Activated T-helper 1 cell treated with anti-CD3 and anti-CD28 coated beads, Interleukin-12 subunit alpha, Interleukin-12 subunit beta, Interleukin-2, Interleukin-4 antibody, amounts not matched to agents 30 ng/mL and 10 ng/mL and 1 ng/mL, durations not matched to agents 14 hours and 24 hours and 36 hours (primary cell): ENCODE measurements at regions of chr16 and their contacts with region 1.

Region 1: GRCh38 chr16:1677802-1678496 is at the start of gene JPT2:
- DNase-seq: peak; percentile 96
- H3K4me3 Mint-ChIP-seq: peak within 1 kb of the TSS; percentile 92
- H3K27ac Mint-ChIP-seq: peak within 1 kb of the TSS; percentile 91
- H3K4me1 Mint-ChIP-seq: peaks cover 32% of the 10 kb centered on the region
- H3K27me3 Mint-ChIP-seq: no peaks in the 10 kb centered on the region
- total RNA-seq, gene JPT2: 106 and 119 TPM in 2 replicates

Region 2: DNA sequence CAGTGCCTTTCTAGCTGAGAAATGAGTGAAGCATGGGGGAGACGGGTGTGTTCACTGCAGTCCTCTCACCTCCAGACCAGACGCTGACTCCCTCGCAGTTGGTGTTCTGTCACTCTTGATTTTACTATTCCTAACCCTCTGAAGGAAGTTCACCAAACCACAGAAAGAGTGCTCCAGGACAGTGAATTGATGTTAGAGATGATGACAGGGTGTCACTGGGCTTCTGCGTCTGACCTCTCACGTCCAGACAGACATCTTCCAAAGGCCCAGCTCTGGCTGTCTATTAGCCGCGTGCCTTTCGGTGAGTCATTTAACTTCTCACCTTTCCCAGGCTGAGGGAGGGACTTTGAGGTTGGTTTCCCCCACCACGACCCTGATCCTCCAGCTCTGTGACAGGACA is 57.6 kb before region 1 on chr16:
- intact Hi-C with region 1: loop called (anchors 2 kb)
- DNase-seq: no peak
- H3K4me3 Mint-ChIP-seq: no peak overlapping the region
- H3K27ac Mint-ChIP-seq: no peak overlapping the region
- H3K4me1 Mint-ChIP-seq: peaks cover 34% of the 10 kb centered on the region
- H3K27me3 Mint-ChIP-seq: no peaks in the 10 kb centered on the region

Region 3: GRCh38 chr16:1772736-1773584 is 95.0 kb after region 1 on chr16 and contains the starts of genes EME2 and MRPS34:
- intact Hi-C with region 1: loop called (anchors 1 kb)
- DNase-seq: peak; percentile 82
- H3K4me3 Mint-ChIP-seq: peak within 1 kb of the TSS; percentile 100
- H3K27ac Mint-ChIP-seq: peak within 1 kb of the TSS; percentile 98
- H3K4me1 Mint-ChIP-seq: peaks cover 8% of the 10 kb centered on the region
- H3K27me3 Mint-ChIP-seq: no peaks in the 10 kb centered on the region
- total RNA-seq, gene EME2: 31.0 and 32.7 TPM in 2 replicates
- total RNA-seq, gene MRPS34: 209 and 215 TPM in 2 replicates